Body of pancreas (tissue), 4 donors: ENCODE measurements at regions of chr1 and their contacts with region 1.

Region 1: GRCh38 chr1:117121776-117122697 is 488 bp upstream of the TRIM45 start:
- DNase-seq: peak; percentile 96 to 97 (median 97)
- ATAC-seq: peak; percentile 95
- H3K4me3 ChIP-seq: peak overlapping the region; percentile 35 to 62
- H3K27ac ChIP-seq: peak overlapping the region; percentile 77 to 94 (median 92)
- H3K4me1 ChIP-seq: peaks cover 27% of the 10 kb centered on the region
- H3K27me3 ChIP-seq: no peaks in the 10 kb centered on the region
- CTCF ChIP-seq: peak; percentile 63 to 89 (median 84)
- POLR2A ChIP-seq: peak; percentile 35 to 76 (median 68)

Region 2: DNA sequence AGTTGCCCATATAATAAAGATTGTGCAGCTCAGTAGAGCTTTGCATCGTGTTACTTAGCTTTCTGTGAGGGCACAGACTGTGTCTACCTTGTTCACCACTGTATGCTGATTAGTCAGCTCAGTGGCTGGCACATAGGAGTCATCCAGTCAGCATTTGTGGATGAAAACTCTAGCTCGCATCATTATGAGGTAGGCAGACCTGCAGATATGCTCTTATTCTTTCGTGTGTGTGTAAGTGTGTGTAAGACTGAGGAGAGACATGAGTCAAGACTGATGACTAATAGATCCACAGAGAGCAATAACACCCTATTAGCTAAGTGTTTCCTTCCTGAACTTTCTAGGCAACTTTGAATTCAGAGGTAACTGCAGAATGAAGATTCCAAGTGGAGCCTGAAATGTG is 44.8 kb before region 1 on chr1:
- intact Hi-C with region 1: loop called (anchors 10 kb)
- DNase-seq: no peak
- ATAC-seq: no peak
- H3K4me3 ChIP-seq: no peak overlapping the region
- H3K27ac ChIP-seq: no peak overlapping the region
- H3K4me1 ChIP-seq: no peaks in the 10 kb centered on the region
- H3K27me3 ChIP-seq: no peaks in the 10 kb centered on the region
- CTCF ChIP-seq: no peak
- POLR2A ChIP-seq: no peak